ENCODE measurements at regions of chr5 and their contacts with region 1.

Region 1: DNA sequence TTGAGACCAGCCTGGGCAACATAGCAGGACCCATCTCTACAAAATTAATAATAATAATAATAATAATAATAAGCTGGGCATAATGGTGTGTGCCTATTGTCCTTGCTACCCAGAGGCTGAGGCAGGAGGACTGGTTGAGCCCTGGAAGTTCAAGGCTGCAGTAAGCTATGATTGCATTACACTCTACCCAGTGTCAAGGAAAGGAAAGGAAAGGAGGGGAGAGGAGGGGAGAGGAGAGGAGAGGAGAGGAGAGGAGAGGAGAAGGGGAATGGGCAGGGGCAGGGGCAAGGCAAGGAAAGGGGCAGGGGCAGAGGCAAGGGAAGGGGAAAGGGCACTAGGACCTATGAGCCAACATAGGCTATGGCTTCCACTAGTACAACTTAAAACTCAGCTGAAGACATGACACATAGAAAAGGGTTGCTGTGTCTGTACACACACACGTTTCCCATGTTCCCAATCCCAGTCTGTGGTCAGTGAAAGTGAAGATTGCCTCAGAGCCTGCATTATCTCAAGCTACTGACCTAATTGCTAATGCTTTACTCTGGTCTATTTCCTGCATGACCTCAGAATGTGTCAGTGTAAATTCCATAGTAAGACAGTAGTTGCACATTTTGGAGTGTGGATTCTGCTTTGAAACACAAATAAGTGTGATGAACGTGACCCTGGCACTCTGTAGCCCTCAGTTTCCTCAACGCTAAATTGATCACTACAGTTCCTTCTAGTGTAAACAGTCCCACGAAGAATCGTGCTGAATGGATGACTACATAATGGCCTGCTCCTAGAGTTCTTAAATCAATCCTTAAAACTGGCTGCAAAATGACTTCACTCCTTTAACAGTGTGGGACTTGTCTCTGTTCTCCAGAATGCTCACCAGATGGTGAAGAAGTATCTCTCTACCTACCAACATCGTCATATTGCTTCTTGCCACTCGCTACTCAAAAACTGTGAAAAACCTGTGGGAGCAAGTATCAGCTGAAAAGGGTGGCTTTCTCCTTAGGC is 497.0 kb downstream of the RAB3C start:
- DNase-seq: no peak

Region 2: DNA sequence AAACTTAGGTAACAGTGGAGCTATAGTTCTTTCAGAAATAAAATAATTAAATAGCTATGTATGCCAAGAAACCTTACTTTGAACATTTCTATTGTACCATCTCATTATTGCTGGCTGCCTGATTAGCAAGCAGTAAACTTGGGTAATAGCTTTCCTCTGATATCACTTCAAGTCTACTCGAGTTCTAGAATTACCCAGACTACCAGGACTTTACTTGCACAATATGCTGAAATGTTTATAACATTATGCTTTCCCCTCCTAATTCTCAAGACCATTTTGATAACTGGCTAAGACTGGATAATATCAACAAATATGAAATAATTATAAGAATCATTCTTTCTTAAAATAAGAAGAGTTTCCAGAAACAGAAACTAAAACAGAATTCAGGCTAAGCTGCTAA is 15.6 kb after region 1 on chr5:
- intact Hi-C with region 1: no loop called
- DNase-seq: no peak

Region 3: DNA sequence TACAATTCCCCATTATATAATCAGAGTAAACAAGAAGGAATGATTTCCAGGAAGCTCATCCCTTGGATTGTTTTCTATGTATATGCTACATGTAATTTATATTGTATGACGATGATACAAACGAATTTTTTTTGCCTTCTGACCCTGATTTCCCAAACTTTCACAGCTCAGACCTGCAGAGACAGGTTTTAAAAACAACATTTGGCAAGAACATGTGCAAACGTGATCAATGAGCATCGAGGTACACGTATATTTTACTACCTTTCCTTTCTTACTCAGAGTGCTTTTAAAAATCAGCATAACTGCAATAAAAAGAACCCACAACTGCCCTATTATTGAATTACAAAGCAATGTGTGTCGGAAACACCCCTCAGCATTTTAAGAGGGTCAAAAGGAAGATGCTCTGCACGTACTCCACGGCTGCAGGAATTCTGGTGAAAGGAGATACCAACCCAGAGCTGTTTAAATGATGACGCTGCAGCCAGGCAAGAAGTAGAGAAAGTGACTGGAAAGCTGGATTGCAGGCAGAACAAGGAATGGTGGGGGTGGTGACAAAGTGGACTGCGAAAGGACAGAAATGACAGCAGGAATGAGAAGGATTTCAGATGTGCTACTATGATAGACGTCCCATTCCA is 36.4 kb after region 1 on chr5:
- intact Hi-C with region 1: loop called in 1 of 2 experiments (anchors 2 kb)
- DNase-seq: no peak

Region 4: GRCh38 chr5:59287320-59287719 is 207.4 kb after region 1 on chr5:
- intact Hi-C with region 1: loop called in 1 of 2 experiments (anchors 5 kb)
- DNase-seq: no peak

Region 5: DNA sequence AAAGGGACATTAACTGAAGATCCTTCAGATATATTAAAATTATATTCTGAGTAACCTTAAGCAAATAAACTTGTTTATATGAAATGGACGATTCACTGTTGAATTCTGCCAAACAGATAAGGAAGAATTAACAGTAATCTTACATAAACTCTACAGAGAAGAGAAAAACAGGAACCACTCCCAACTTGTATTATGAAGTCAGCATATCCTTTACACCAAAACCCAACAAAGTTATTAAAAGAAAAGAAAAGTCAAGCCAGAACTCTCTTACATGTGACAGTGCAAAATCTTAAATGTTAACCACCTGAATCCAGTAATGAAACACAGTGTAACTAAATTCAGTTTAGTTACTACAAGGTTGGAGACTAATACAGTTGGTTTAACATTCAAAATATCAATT is 1434.2 kb after region 1 on chr5:
- intact Hi-C with region 1: no loop called
- DNase-seq: no peak